PC-3 (cell line): ENCODE measurements at regions of chr10 and their contacts with region 1.

Region 1: GRCh38 chr10:21194464-21194993 is 297.4 kb upstream of the NEBL start:
- DNase-seq: peak; percentile 85
- ATAC-seq: peak; percentile 86
- H3K4me3 ChIP-seq: peak overlapping the region; percentile 32; the same call in 1 of the 2 replicates
- H3K27ac ChIP-seq: peak overlapping the region; percentile 77
- H3K4me1 ChIP-seq: peaks cover 38% of the 10 kb centered on the region
- H3K27me3 ChIP-seq: no peaks in the 10 kb centered on the region
- CTCF ChIP-seq: no peak

Region 2: DNA sequence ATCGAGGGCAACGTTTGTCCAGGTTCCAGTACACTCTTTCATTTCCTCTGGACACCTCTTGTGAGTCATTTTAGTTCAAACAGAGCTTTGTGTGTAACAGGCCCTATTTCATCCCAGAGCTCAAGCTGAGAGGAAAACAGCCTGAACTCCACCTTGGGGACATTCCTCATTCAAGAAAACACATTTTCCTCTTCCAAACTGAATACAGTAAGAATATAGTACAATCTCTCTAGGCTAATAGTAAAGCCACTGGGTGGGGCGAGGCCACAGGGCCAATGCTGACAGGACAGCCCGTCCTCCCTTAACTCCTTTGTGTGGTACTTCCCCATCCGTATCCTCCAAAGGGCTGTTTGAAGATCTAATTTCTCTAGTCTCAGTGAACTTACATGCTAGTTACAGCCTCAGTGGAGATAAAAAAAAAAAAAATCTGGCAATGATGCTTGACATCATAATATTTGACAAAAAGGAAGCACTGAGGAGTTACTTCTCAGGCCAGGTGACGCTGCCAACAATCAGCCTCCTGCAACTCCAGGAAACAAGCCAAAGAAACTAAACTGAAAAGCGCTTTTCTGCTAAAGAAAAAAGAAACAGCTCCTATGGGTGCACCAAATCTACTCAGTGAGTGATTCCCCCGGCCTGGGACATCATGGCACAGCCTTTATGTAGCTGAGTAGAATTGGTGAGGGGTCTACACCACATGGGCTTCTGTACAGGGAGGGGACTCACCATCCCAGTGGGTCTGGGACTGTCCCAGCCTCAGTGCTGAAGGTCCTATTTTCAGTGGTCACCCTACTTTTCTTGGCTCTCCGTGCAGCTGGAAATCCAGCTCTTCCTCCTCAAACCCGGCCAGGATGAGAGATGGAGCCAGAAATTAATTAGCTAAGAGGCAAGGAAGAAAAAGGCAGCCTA is 59.3 kb before region 1 on chr10:
- CTCF ChIA-PET with region 1: no interaction called
- POLR2A ChIA-PET with region 1: no interaction called
- intact Hi-C with region 1: loop called (anchors 1 kb)
- DNase-seq: peak; percentile 94
- ATAC-seq: peak; percentile 92
- H3K4me3 ChIP-seq: peak overlapping the region; percentile 56; the same call in 1 of the 2 replicates
- H3K27ac ChIP-seq: peak overlapping the region; percentile 98
- H3K4me1 ChIP-seq: peaks cover 28% of the 10 kb centered on the region
- H3K27me3 ChIP-seq: no peaks in the 10 kb centered on the region
- CTCF ChIP-seq: no peak

Region 3: GRCh38 chr10:21173812-21174714 is 20.5 kb before region 1 on chr10:
- CTCF ChIA-PET with region 1: interaction called, 3 read pairs
- POLR2A ChIA-PET with region 1: interaction called, 6 read pairs
- intact Hi-C with region 1: loop called (anchors 1 kb)
- DNase-seq: peak; percentile 77
- ATAC-seq: peak; percentile 72
- H3K4me3 ChIP-seq: peak overlapping the region; percentile 91
- H3K27ac ChIP-seq: peak overlapping the region; percentile 79
- H3K4me1 ChIP-seq: peaks cover 34% of the 10 kb centered on the region
- H3K27me3 ChIP-seq: no peaks in the 10 kb centered on the region
- CTCF ChIP-seq: no peak